ENCODE measurements at regions of chr5 and their contacts with region 1.

Region 1: GRCh38 chr5:57499262-57500050 is 16.8 kb upstream of the ACTBL2 start:
- DNase-seq: peak; percentile 24
- H3K4me3 Mint-ChIP-seq: no peak overlapping the region
- H3K27ac Mint-ChIP-seq: no peak overlapping the region
- H3K4me1 Mint-ChIP-seq: peaks cover 28% of the 10 kb centered on the region
- H3K27me3 Mint-ChIP-seq: peaks cover 4% of the 10 kb centered on the region

Region 2: GRCh38 chr5:57082441-57083067 is 416.9 kb before region 1 on chr5:
- CTCF ChIA-PET with region 1: no interaction called
- POLR2A ChIA-PET with region 1: no interaction called
- intact Hi-C with region 1: no loop called
- DNase-seq: no peak
- H3K4me3 Mint-ChIP-seq: no peak overlapping the region
- H3K27ac Mint-ChIP-seq: no peak overlapping the region
- H3K4me1 Mint-ChIP-seq: no peaks in the 10 kb centered on the region
- H3K27me3 Mint-ChIP-seq: peaks cover 8% of the 10 kb centered on the region

Region 3: DNA sequence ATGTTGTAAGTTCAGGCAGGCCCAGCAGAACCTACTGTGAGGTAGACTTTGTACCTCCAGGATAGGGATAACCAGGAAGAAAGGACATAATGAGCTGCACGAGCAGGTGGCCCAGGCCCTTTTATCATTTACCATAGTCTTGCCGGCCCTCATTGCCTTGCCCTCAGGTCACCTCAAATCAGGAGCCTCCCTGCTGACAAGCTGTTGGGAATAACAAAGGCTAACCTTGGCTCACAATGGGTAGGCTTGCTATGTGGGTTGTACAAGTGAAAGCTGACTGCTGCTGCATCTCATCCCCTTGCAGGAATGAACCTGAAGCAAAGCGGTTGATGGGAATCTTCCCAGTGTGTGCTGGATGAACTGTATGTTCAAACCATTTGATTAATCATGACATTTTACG is 142.6 kb after region 1 on chr5:
- CTCF ChIA-PET with region 1: no interaction called
- POLR2A ChIA-PET with region 1: no interaction called
- intact Hi-C with region 1: no loop called
- DNase-seq: no peak
- H3K4me3 Mint-ChIP-seq: no peak overlapping the region
- H3K27ac Mint-ChIP-seq: no peak overlapping the region
- H3K4me1 Mint-ChIP-seq: no peaks in the 10 kb centered on the region
- H3K27me3 Mint-ChIP-seq: peaks cover 14% of the 10 kb centered on the region

Region 4: DNA sequence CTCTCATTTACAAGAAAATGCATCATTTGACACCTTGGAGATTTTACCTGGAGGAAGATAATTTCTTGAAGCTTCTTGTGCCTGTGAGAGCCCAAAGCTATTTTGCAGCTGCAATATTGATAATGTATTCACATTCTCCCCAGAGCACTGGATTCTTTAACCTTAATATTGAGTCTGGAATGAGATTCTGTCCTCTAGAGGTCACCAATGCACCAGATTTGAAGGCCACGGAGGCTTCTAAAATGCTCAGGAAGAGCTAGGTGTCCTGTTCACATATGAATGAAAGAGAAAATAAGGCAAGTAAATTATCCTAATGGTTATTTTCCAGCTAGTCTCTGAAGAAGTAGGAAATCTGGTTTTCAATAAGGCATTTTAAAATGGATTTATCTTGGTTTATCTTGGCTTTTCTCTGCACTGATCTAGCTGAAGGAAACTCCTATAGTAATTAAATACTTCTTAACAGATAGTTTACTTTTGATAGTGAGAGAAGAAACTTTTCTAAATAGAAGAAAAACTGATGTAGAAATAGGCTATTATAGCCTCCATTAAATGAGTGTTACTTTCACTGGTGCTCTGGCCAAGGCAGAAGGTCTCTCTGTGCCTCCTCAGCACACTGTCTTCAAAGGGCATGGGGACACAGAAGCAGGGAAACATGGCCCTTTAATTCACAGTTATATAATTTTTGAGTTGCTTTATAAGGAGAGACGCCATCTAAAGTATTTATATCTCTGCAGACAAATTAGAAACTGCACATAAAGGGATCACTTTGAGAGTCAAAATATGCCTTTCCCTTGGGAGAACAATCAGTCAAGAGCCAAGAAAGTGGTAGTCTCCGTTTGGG is 280.1 kb after region 1 on chr5:
- CTCF ChIA-PET with region 1: no interaction called
- POLR2A ChIA-PET with region 1: no interaction called
- intact Hi-C with region 1: loop called (anchors 5 kb)
- DNase-seq: peak; percentile 21
- H3K4me3 Mint-ChIP-seq: no peak overlapping the region
- H3K27ac Mint-ChIP-seq: no peak overlapping the region
- H3K4me1 Mint-ChIP-seq: no peaks in the 10 kb centered on the region
- H3K27me3 Mint-ChIP-seq: peaks cover 6% of the 10 kb centered on the region